ENCODE measurements at regions of chr1 and their contacts with region 1.

Region 1: DNA sequence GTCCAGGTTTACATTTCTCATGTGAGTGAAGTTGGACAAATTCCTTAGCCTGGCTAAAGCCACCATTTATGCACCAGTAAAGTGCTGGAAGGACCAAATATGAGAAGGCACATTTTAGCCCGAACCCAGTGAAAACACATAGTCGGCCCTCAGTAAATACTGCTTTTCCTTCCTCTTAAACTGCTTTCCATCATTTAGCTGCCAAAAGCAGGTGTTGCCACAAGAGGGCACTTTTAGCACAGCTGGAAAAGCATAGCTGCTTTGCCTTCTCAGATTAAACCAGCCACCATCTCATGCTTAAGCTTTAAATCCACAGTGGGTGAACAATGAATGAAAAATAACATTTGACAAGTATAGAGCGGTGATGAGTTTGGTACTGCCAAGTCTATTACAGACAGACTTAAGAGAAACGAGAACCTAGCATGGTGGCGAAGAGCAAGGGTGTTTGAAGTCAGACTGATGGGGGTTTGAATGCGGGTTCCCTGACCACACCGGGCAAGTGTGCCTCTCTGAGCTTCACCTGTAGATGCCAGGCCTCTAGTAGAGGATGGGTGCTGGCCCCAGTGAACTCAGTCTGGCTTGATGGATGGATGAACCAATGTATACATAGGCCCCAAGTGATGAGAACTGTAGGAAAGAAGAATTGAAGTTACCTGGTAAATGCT is 57.8 kb downstream of the SLC35D1 start:
- DNase-seq: peak in 1 of 2 donors; percentile 80
- H3K4me3 ChIP-seq: no peak overlapping the region
- H3K27ac ChIP-seq: no peak overlapping the region
- H3K4me1 ChIP-seq: peaks cover 0 to 3% of the 10 kb centered on the region in 2 donors
- H3K27me3 ChIP-seq: no peaks in the 10 kb centered on the region
- CTCF ChIP-seq: peak; percentile 77 to 88 (median 80)

Region 2: DNA sequence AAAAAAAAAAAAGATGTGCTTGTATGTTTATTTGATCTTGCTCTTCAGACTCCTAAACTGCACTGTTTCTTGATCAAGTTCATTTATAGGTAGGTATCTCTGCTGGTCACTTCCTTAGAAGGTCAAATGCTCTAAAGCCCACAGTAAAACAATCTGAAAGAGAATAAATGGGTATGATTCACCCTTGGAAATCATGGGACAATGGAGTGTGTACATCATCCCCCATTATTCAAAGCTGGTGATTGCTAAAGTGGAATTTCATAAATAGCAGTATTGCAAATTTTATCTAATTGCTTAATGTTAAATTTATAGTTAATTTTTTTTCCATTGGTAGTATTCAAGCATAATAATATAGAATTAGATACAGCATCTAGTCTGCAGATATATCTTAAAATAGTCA is 17.9 kb before region 1 on chr1:
- intact Hi-C with region 1: no loop called
- DNase-seq: no peak
- H3K4me3 ChIP-seq: no peak overlapping the region
- H3K27ac ChIP-seq: no peak overlapping the region
- H3K4me1 ChIP-seq: peaks cover 0 to 3% of the 10 kb centered on the region in 2 donors
- H3K27me3 ChIP-seq: no peaks in the 10 kb centered on the region
- CTCF ChIP-seq: no peak

Region 3: DNA sequence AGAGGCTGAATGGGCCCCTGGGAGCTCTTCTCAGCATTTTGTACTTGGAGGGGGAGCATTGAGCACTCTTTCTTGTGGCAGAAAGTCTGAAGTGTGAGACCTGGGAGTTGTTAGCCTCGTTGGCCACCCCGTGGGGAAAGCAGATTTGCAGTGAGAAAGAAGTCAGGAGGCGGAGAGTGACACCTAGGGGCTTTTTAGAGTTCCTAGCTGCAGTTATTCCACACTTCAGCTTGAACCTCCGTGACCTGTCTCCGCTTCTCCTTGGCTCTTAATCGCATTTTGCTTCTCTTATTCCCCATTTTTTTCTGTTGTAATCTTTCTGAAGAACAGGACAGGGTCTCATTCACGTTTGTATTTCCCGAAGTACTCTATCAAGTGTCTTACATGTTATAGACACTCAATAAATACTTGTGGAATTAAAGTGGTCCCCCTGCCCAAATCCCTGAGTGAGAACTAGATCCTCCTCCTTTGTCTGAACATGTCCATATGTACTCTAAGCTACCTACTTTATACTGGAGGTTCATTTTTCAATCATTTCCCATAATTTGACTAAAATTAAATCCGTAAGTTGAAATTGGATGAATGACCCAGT is 153.1 kb after region 1 on chr1:
- intact Hi-C with region 1: loop called (anchors 1 kb)
- DNase-seq: peak in 1 of 2 donors; percentile 73
- H3K4me3 ChIP-seq: no peak overlapping the region
- H3K27ac ChIP-seq: no peak overlapping the region
- H3K4me1 ChIP-seq: peaks cover 0 to 3% of the 10 kb centered on the region in 2 donors
- H3K27me3 ChIP-seq: no peaks in the 10 kb centered on the region
- CTCF ChIP-seq: peak; percentile 67 to 84 (median 77)

Region 4: DNA sequence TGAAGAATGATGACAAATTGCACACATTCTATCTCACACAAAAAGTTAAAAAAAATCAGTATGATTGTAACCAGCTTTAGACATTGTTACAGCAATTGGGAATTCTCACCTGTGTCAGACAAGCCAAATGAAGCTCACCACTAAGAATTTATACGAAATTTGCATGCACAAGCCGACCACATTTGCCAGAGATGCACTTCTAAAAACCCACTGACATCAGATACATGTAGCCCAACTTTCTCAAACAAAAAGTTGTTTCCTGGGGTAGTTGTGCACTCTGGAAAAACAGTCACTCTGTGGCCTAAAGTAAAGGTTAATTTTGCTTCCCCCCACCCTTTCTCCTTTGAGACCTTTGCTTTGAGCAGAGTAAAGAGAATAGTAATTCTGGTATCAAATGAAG is 243.6 kb after region 1 on chr1:
- intact Hi-C with region 1: no loop called
- DNase-seq: no peak
- H3K4me3 ChIP-seq: no peak overlapping the region
- H3K27ac ChIP-seq: no peak overlapping the region
- H3K4me1 ChIP-seq: no peaks in the 10 kb centered on the region
- H3K27me3 ChIP-seq: no peaks in the 10 kb centered on the region
- CTCF ChIP-seq: no peak

Measured in ascending aorta (tissue), 2 donors.